Naive thymus-derived CD4-positive, alpha-beta T cell (primary cell): ENCODE measurements at regions of chr4 and their contacts with region 1.

Region 1: GRCh38 chr4:107719922-107720722 is at the start of gene PAPSS1:
- DNase-seq: peak; percentile 91 to 96 (median 94)
- ATAC-seq: peak; percentile 94
- H3K4me3 ChIP-seq: peak within 1 kb of the TSS; percentile 88
- H3K4me3 Mint-ChIP-seq: peak within 1 kb of the TSS; percentile 92 to 99 (median 96)
- H3K27ac ChIP-seq: peak within 1 kb of the TSS; percentile 78
- H3K27ac Mint-ChIP-seq: peak within 1 kb of the TSS; percentile 93 to 99 (median 95)
- H3K4me1 ChIP-seq: peaks cover 4 to 12% of the 10 kb centered on the region in 2 donors
- H3K4me1 Mint-ChIP-seq: peaks cover 19 to 38% (median 32%) of the 10 kb centered on the region in 7 donors
- H3K27me3 ChIP-seq: no peaks in the 10 kb centered on the region
- H3K27me3 Mint-ChIP-seq: no peaks in the 10 kb centered on the region
- total RNA-seq, gene PAPSS1: 7.8 to 30.0 (median 16.1) TPM

Region 2: GRCh38 chr4:106315968-106316772 is 1404.0 kb before region 1 on chr4 and contains the starts of genes AIMP1 and TBCK:
- CTCF ChIA-PET with region 1: no interaction called
- POLR2A ChIA-PET with region 1: interaction called, 6 read pairs
- intact Hi-C with region 1: loop called (anchors 1 kb)
- DNase-seq: peak; percentile 74 to 92 (median 88)
- ATAC-seq: peak; percentile 93
- H3K4me3 ChIP-seq: peak within 1 kb of the TSS; percentile 95
- H3K4me3 Mint-ChIP-seq: no peak within 1 kb of the TSS
- H3K27ac ChIP-seq: peak within 1 kb of the TSS; percentile 90
- H3K27ac Mint-ChIP-seq: no peak within 1 kb of the TSS
- H3K4me1 ChIP-seq: peaks cover 22 to 24% of the 10 kb centered on the region in 2 donors
- H3K4me1 Mint-ChIP-seq: peaks cover 23 to 50% (median 43%) of the 10 kb centered on the region in 7 donors
- H3K27me3 ChIP-seq: no peaks in the 10 kb centered on the region
- H3K27me3 Mint-ChIP-seq: no peaks in the 10 kb centered on the region
- total RNA-seq, gene AIMP1: 44.2 to 59.2 (median 56.8) TPM
- total RNA-seq, gene TBCK: 41.3 to 70.7 (median 60.7) TPM

Region 3: GRCh38 chr4:107757864-107758476 is 37.8 kb after region 1 on chr4:
- CTCF ChIA-PET with region 1: no interaction called
- POLR2A ChIA-PET with region 1: no interaction called
- intact Hi-C with region 1: no loop called
- DNase-seq: peak in 5 of 9 donors; percentile 14 to 40 (median 23)
- ATAC-seq: peak; percentile 56
- H3K4me3 ChIP-seq: no peak overlapping the region
- H3K4me3 Mint-ChIP-seq: no peak overlapping the region
- H3K27ac ChIP-seq: no peak overlapping the region
- H3K27ac Mint-ChIP-seq: no peak overlapping the region
- H3K4me1 ChIP-seq: no peaks in the 10 kb centered on the region
- H3K4me1 Mint-ChIP-seq: peaks cover 0 to 5% (median 0%) of the 10 kb centered on the region in 7 donors
- H3K27me3 ChIP-seq: no peaks in the 10 kb centered on the region
- H3K27me3 Mint-ChIP-seq: peaks cover under 1 to 15% (median 10%) of the 10 kb centered on the region in 5 donors

Region 4: GRCh38 chr4:107930821-107931774 is 211.0 kb after region 1 on chr4 and contains the start of gene CYP2U1:
- CTCF ChIA-PET with region 1: no interaction called
- POLR2A ChIA-PET with region 1: interaction called, 4 read pairs
- intact Hi-C with region 1: loop called (anchors 1 kb)
- DNase-seq: peak; percentile 74 to 84 (median 81)
- ATAC-seq: peak; percentile 96
- H3K4me3 ChIP-seq: peak within 1 kb of the TSS; percentile 86
- H3K4me3 Mint-ChIP-seq: peak within 1 kb of the TSS; percentile 90 to 98 (median 92)
- H3K27ac ChIP-seq: peak within 1 kb of the TSS; percentile 71
- H3K27ac Mint-ChIP-seq: peak within 1 kb of the TSS; percentile 65 to 98 (median 88)
- H3K4me1 ChIP-seq: peaks cover 8 to 12% of the 10 kb centered on the region in 2 donors
- H3K4me1 Mint-ChIP-seq: peaks cover 21 to 50% (median 35%) of the 10 kb centered on the region in 7 donors
- H3K27me3 ChIP-seq: no peaks in the 10 kb centered on the region
- H3K27me3 Mint-ChIP-seq: peaks cover 0 to 17% (median 0%) of the 10 kb centered on the region in 5 donors
- total RNA-seq, gene CYP2U1: 3.8 to 11.4 (median 5.8) TPM

Region 5: GRCh38 chr4:108109997-108110416 is 389.9 kb after region 1 on chr4:
- CTCF ChIA-PET with region 1: no interaction called
- POLR2A ChIA-PET with region 1: no interaction called
- intact Hi-C with region 1: loop called in 1 of 2 experiments (anchors 5 kb)
- DNase-seq: no peak
- ATAC-seq: no peak
- H3K4me3 ChIP-seq: peak overlapping the region; percentile 7
- H3K4me3 Mint-ChIP-seq: peak overlapping the region; percentile 69 to 89 (median 78)
- H3K27ac ChIP-seq: peak overlapping the region; percentile 80
- H3K27ac Mint-ChIP-seq: peak overlapping the region; percentile 84 to 98 (median 90)
- H3K4me1 ChIP-seq: peaks cover 72 to 98% of the 10 kb centered on the region in 2 donors
- H3K4me1 Mint-ChIP-seq: peaks cover 70 to 97% (median 95%) of the 10 kb centered on the region in 7 donors
- H3K27me3 ChIP-seq: no peaks in the 10 kb centered on the region
- H3K27me3 Mint-ChIP-seq: no peaks in the 10 kb centered on the region

Region 6: DNA sequence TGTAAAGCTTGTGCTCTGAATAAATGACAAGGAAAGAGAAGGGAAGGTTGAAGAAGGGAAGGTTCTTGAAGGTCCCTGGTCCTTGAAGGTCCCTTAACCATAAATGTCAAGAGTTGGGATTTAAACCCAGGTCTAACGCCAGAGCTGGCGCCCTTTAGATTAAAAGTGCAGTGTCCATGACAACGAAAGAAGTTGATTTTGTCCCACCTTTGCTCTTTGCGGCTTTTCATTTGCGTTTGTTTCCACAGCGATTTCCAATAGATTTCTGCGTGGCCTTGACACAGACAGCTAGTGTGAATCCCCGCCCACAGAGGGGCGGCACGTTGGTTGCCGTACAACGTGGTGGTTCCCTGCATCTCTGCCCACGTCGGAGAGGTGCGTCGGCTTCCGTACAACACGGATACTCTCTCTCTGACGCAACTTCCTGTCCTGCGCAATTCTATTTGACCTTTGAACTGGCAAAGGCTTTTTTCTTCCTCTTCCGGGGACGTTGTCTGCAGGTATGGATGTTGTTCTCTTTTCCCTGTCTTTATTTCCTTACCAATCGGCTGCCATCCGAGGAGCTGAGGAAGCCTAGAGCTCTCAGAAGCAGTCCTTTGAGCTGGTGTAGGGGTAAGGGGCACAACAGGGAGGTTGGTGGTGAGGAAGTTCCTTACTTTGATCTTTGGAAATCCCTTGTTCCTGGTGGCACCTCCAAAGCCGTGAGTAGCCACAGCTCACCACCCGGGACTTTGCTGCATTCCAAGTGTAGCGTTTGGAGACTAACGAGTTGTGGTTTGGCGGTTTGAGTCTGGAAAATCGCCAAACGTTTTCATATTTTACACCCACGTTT is 900.2 kb after region 1 on chr4 and contains the start of gene RPL34:
- CTCF ChIA-PET with region 1: no interaction called
- POLR2A ChIA-PET with region 1: interaction called, 17 read pairs
- intact Hi-C with region 1: loop called (anchors 1 kb)
- DNase-seq: peak; percentile 85 to 99 (median 96)
- ATAC-seq: peak; percentile 100
- H3K4me3 ChIP-seq: peak within 1 kb of the TSS; percentile 98
- H3K4me3 Mint-ChIP-seq: peak within 1 kb of the TSS; percentile 87 to 99 (median 96)
- H3K27ac ChIP-seq: peak within 1 kb of the TSS; percentile 90
- H3K27ac Mint-ChIP-seq: peak within 1 kb of the TSS; percentile 95 to 99 (median 97)
- H3K4me1 ChIP-seq: peaks cover 29 to 30% of the 10 kb centered on the region in 2 donors
- H3K4me1 Mint-ChIP-seq: peaks cover 33 to 81% (median 66%) of the 10 kb centered on the region in 7 donors
- H3K27me3 ChIP-seq: no peaks in the 10 kb centered on the region
- H3K27me3 Mint-ChIP-seq: peaks cover 0 to 3% (median 0%) of the 10 kb centered on the region in 5 donors
- total RNA-seq, gene RPL34: 1,411 to 3,442 (median 3,215) TPM

Region 7: DNA sequence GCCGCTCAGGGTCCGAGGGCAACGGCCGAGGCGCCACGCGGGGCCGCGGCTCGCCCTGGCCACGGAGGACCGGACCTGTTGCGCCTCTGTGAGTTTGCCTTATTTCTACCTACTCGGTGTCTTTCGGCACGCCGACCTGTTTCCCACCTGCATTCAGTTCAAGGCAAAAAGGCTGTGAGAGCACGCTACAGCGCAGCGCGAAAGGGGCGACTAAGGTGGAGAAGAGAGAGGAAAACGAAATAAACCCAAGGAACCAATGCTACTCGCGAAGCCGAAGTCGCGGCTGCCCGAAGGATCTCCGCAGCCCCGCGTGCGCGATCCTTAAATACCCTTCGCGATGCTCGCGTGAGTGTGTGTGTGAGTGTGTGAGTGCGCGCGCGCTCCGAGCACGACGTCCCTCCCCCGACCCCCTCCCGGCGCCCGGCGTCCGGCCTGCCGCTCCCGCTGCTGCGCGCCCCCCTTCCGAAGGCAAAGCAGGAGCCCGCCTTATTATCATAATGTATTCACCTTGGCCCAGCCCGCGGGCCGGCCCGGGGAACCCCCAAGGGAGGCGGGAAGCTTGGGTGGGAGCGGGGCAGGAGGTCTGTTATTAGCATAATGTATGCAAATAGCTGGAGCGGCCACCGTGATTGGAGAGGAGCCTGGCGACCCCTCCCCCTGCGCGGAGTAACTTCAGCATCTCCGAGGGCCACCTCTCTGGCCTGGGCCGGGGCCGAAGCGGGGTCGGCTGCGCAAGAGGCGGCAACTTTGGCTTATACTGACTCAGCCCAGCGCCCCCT is 1582.4 kb after region 1 on chr4 and contains the start of gene COL25A1:
- CTCF ChIA-PET with region 1: no interaction called
- POLR2A ChIA-PET with region 1: no interaction called
- intact Hi-C with region 1: loop called in 1 of 2 experiments (anchors 2 kb)
- DNase-seq: peak; percentile 7 to 60 (median 41)
- ATAC-seq: peak; percentile 77
- H3K4me3 ChIP-seq: peak within 1 kb of the TSS; percentile 73
- H3K4me3 Mint-ChIP-seq: peak within 1 kb of the TSS; percentile 76 to 92 (median 84)
- H3K27ac ChIP-seq: no peak within 1 kb of the TSS
- H3K27ac Mint-ChIP-seq: peak within 1 kb of the TSS in 5 of 9 donors; percentile 21 to 65 (median 36)
- H3K4me1 ChIP-seq: peaks cover 8 to 9% of the 10 kb centered on the region in 2 donors
- H3K4me1 Mint-ChIP-seq: peaks cover 11 to 25% (median 19%) of the 10 kb centered on the region in 7 donors
- H3K27me3 ChIP-seq: peaks cover 10 to 16% of the 10 kb centered on the region in 2 donors
- H3K27me3 Mint-ChIP-seq: peaks cover 47 to 80% (median 64%) of the 10 kb centered on the region in 5 donors
- total RNA-seq, gene COL25A1: 0.22 to 0.59 (median 0.49) TPM in 4 of 5 experiments, not detected in the other

Region 8: GRCh38 chr4:109559983-109560686 is 1840.0 kb after region 1 on chr4 and contains the start of gene MCUB:
- CTCF ChIA-PET with region 1: no interaction called
- POLR2A ChIA-PET with region 1: no interaction called
- intact Hi-C with region 1: loop called (anchors 2 to 10 kb)
- DNase-seq: peak; percentile 80 to 95 (median 93)
- ATAC-seq: peak; percentile 96
- H3K4me3 ChIP-seq: peak within 1 kb of the TSS; percentile 83
- H3K4me3 Mint-ChIP-seq: peak within 1 kb of the TSS; percentile 89 to 100 (median 98)
- H3K27ac ChIP-seq: peak within 1 kb of the TSS; percentile 96
- H3K27ac Mint-ChIP-seq: peak within 1 kb of the TSS; percentile 90 to 100 (median 98)
- H3K4me1 ChIP-seq: peaks cover 25 to 41% of the 10 kb centered on the region in 2 donors
- H3K4me1 Mint-ChIP-seq: peaks cover 34 to 76% (median 58%) of the 10 kb centered on the region in 7 donors
- H3K27me3 ChIP-seq: no peaks in the 10 kb centered on the region
- H3K27me3 Mint-ChIP-seq: no peaks in the 10 kb centered on the region
- total RNA-seq, gene MCUB: 83.4 to 177 (median 114) TPM